HepG2 (cell line): ENCODE measurements at regions of chr7 and their contacts with region 1.

Region 1: GRCh38 chr7:49461852-49462251 is 311.6 kb upstream of the VWC2 start:
- DNase-seq: no peak
- ATAC-seq: no peak
- H3K4me3 ChIP-seq: no peak overlapping the region
- H3K27ac ChIP-seq: no peak overlapping the region
- H3K4me1 ChIP-seq: no peaks in the 10 kb centered on the region
- H3K27me3 ChIP-seq: no peaks in the 10 kb centered on the region
- CTCF ChIP-seq: no peak
- EP300 ChIP-seq: no peak
- POLR2A ChIP-seq: no peak
- RAD21 ChIP-seq: no peak

Region 2: GRCh38 chr7:49433794-49434193 is 28.1 kb before region 1 on chr7:
- CTCF ChIA-PET with region 1: no interaction called
- POLR2A ChIA-PET with region 1: no interaction called
- in situ Hi-C with region 1: no loop called
- intact Hi-C with region 1: no loop called
- DNase-seq: no peak
- ATAC-seq: no peak
- H3K4me3 ChIP-seq: no peak overlapping the region
- H3K27ac ChIP-seq: no peak overlapping the region
- H3K4me1 ChIP-seq: no peaks in the 10 kb centered on the region
- H3K27me3 ChIP-seq: no peaks in the 10 kb centered on the region
- CTCF ChIP-seq: no peak
- EP300 ChIP-seq: no peak
- POLR2A ChIP-seq: no peak
- RAD21 ChIP-seq: no peak

Region 3: GRCh38 chr7:49488573-49488972 is 26.7 kb after region 1 on chr7:
- CTCF ChIA-PET with region 1: no interaction called
- POLR2A ChIA-PET with region 1: no interaction called
- in situ Hi-C with region 1: no loop called
- intact Hi-C with region 1: loop called (anchors 1 kb)
- DNase-seq: no peak
- ATAC-seq: no peak
- H3K4me3 ChIP-seq: no peak overlapping the region
- H3K27ac ChIP-seq: no peak overlapping the region
- H3K4me1 ChIP-seq: no peaks in the 10 kb centered on the region
- H3K27me3 ChIP-seq: no peaks in the 10 kb centered on the region; a peak in 1 of 5 replicates
- CTCF ChIP-seq: no peak
- EP300 ChIP-seq: no peak
- POLR2A ChIP-seq: no peak
- RAD21 ChIP-seq: no peak

Region 4: DNA sequence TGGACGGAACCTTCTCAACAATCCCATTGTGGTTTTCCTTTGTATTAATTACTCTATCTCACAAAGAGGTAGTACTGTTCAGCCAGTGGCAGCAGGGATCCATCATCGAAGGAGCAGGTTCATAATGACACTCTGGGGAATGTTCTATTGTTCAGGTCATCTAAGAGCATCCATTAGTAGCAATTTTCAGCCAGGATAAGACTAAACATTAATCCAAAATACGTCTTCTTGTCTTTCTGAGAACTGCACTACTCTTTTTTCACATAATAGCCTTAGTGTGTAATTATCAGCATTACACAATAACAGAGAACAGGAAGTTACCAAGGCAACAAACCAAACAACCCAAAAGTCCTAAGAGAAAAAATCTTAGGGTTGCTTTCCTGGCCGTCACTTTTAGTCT is 52.1 kb after region 1 on chr7:
- CTCF ChIA-PET with region 1: no interaction called
- POLR2A ChIA-PET with region 1: no interaction called
- in situ Hi-C with region 1: no loop called
- intact Hi-C with region 1: no loop called
- DNase-seq: no peak
- ATAC-seq: no peak
- H3K4me3 ChIP-seq: no peak overlapping the region
- H3K27ac ChIP-seq: no peak overlapping the region
- H3K4me1 ChIP-seq: no peaks in the 10 kb centered on the region
- H3K27me3 ChIP-seq: no peaks in the 10 kb centered on the region
- CTCF ChIP-seq: no peak
- EP300 ChIP-seq: no peak
- POLR2A ChIP-seq: no peak
- RAD21 ChIP-seq: no peak

Region 5: GRCh38 chr7:49766966-49767365 is 305.1 kb after region 1 on chr7:
- CTCF ChIA-PET with region 1: no interaction called
- POLR2A ChIA-PET with region 1: no interaction called
- in situ Hi-C with region 1: no loop called
- intact Hi-C with region 1: no loop called
- DNase-seq: no peak
- ATAC-seq: no peak
- H3K4me3 ChIP-seq: no peak overlapping the region
- H3K27ac ChIP-seq: no peak overlapping the region
- H3K4me1 ChIP-seq: no peaks in the 10 kb centered on the region
- H3K27me3 ChIP-seq: no peaks in the 10 kb centered on the region; a peak in 1 of 5 replicates
- CTCF ChIP-seq: no peak
- EP300 ChIP-seq: no peak
- POLR2A ChIP-seq: no peak
- RAD21 ChIP-seq: no peak